Activated B cell treated with CpG ODN at 0.5 μM for 24 hours (primary cell): ENCODE measurements at regions of chr5 and their contacts with region 1.

Region 1: GRCh38 chr5:93665648-93666047 is 75.8 kb downstream of the POU5F2 start:
- DNase-seq: no peak
- ATAC-seq: no peak
- H3K4me3 Mint-ChIP-seq: no peak overlapping the region
- H3K27ac Mint-ChIP-seq: no peak overlapping the region
- H3K4me1 Mint-ChIP-seq: no peaks in the 10 kb centered on the region
- H3K27me3 Mint-ChIP-seq: no peaks in the 10 kb centered on the region
- CTCF ChIP-seq: no peak

Region 2: GRCh38 chr5:93461756-93462155 is 203.9 kb before region 1 on chr5:
- CTCF ChIA-PET with region 1: no interaction called
- POLR2A ChIA-PET with region 1: no interaction called
- intact Hi-C with region 1: no loop called
- DNase-seq: no peak
- ATAC-seq: no peak
- H3K4me3 Mint-ChIP-seq: no peak overlapping the region
- H3K27ac Mint-ChIP-seq: no peak overlapping the region
- H3K4me1 Mint-ChIP-seq: no peaks in the 10 kb centered on the region
- H3K27me3 Mint-ChIP-seq: no peaks in the 10 kb centered on the region
- CTCF ChIP-seq: no peak

Region 3: DNA sequence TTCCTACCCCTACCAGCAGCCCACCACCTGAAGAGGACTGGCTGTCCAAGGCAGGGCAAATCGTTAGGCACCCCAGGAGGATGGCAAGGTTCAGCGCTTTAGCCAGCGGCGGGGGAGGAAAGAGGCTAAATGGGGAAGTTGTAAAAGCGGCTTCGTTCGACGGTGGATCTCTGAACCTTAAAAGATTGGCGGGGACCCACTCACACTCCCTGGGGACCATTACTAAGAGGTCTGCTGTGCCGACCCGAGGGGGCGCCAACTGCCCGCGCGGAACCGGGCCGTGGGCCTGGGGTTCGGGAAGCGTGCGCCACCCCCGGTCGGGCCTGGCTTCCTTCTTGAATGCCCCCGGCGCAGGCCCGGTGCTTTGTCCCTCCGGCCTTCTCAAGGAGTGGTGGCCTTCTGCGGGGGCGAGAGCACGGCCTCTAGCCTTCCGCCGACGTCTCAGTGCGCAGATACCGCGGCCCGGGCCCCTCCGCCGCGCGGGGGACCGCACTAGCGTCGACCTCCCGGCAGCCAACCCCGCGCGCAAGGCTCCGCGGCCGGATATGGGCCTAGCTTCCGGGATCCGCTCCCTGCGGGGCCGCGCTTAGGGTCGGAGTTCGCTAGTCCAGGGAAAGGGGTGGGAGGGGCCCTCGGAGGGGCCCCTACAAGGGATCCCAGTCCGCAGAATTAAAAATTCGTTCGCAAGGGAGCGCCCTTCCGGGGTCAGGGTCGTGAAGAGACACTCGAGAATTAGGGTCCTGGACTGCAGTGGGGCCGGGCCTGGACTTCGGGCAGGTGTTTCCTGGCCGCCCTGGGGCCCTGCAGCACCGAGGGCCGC is 95.1 kb before region 1 on chr5:
- CTCF ChIA-PET with region 1: no interaction called
- POLR2A ChIA-PET with region 1: no interaction called
- intact Hi-C with region 1: no loop called
- DNase-seq: no peak
- ATAC-seq: peak; percentile 45
- H3K4me3 Mint-ChIP-seq: peak overlapping the region; percentile 42
- H3K27ac Mint-ChIP-seq: no peak overlapping the region
- H3K4me1 Mint-ChIP-seq: peaks cover 17% of the 10 kb centered on the region
- H3K27me3 Mint-ChIP-seq: peaks cover 67% of the 10 kb centered on the region
- CTCF ChIP-seq: no peak

Region 4: GRCh38 chr5:93717162-93717561 is 51.5 kb after region 1 on chr5:
- CTCF ChIA-PET with region 1: no interaction called
- POLR2A ChIA-PET with region 1: no interaction called
- intact Hi-C with region 1: loop called (anchors 5 kb)
- DNase-seq: no peak
- ATAC-seq: no peak
- H3K4me3 Mint-ChIP-seq: no peak overlapping the region
- H3K27ac Mint-ChIP-seq: no peak overlapping the region
- H3K4me1 Mint-ChIP-seq: no peaks in the 10 kb centered on the region
- H3K27me3 Mint-ChIP-seq: no peaks in the 10 kb centered on the region
- CTCF ChIP-seq: no peak